ENCODE measurements at regions of chr13 and their contacts with region 1.

Region 1: GRCh38 chr13:100334214-100334613 is 245.3 kb downstream of the PCCA start:
- DNase-seq: no peak
- H3K4me3 ChIP-seq: no peak overlapping the region
- H3K27ac ChIP-seq: no peak overlapping the region
- H3K4me1 ChIP-seq: no peaks in the 10 kb centered on the region
- H3K27me3 ChIP-seq: no peaks in the 10 kb centered on the region
- CTCF ChIP-seq: no peak

Region 2: GRCh38 chr13:100290165-100290801 is 43.9 kb before region 1 on chr13:
- dilution Hi-C with region 1: no loop called
- DNase-seq: no peak
- H3K4me3 ChIP-seq: no peak overlapping the region
- H3K27ac ChIP-seq: no peak overlapping the region
- H3K4me1 ChIP-seq: no peaks in the 10 kb centered on the region
- H3K27me3 ChIP-seq: no peaks in the 10 kb centered on the region
- CTCF ChIP-seq: no peak

Region 3: GRCh38 chr13:100382785-100383184 is 48.6 kb after region 1 on chr13:
- dilution Hi-C with region 1: no loop called
- DNase-seq: no peak
- H3K4me3 ChIP-seq: no peak overlapping the region
- H3K27ac ChIP-seq: no peak overlapping the region
- H3K4me1 ChIP-seq: peaks cover 4% of the 10 kb centered on the region
- H3K27me3 ChIP-seq: no peaks in the 10 kb centered on the region
- CTCF ChIP-seq: no peak

Region 4: GRCh38 chr13:100392709-100393641 is 58.8 kb after region 1 on chr13:
- dilution Hi-C with region 1: loop called (anchors 10 kb)
- DNase-seq: peak; percentile 92
- H3K4me3 ChIP-seq: no peak overlapping the region
- H3K27ac ChIP-seq: peak overlapping the region; percentile 49
- H3K4me1 ChIP-seq: peaks cover 16% of the 10 kb centered on the region
- H3K27me3 ChIP-seq: no peaks in the 10 kb centered on the region
- CTCF ChIP-seq: no peak

Measured in keratinocyte (primary cell).